BJ (cell line): ENCODE measurements at regions of chr6 and their contacts with region 1.

Region 1: DNA sequence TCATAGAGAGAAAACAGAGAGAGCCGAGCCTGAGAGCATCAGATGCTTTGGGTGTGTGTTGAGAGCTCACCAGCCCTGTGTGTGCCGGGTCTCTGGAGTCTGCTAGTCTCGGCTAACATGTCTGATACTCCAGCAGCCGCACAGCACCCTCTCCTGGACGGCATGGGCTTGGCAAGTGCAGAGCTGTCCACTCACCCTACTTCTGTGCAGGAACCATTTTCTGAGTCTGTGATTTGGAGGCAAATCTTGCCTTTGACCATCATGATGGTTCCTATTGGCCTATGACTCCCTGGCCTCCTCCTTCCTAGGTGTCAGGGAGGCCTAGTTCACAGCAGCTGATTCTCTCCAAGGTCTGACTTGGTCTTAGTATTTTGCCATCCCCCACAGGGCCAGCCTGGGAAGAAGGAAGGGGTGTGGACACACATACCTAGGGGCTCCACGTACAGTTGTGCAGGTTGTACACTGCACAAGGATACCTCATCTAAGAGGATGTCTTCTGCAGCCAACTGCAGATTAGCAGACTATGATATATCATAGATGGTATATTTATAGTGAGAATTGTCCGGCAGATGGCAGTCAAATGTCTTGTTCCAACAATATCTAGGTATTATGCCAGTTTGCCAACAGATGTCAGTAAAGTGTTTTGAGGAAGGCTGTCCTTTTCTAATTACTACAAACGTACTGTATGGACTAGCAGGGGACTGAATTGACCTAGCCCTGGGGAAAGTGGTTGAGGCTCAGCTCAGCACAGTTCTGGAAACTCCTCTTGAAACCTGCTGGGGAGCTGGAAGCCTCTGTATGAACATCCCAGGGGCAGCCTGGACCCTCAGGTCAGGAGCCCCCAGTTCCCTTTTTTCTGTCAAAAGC is 13.0 kb downstream of the FGD2 start:
- DNase-seq: peak; percentile 41
- H3K4me3 ChIP-seq: no peak overlapping the region
- H3K27me3 ChIP-seq: no peaks in the 10 kb centered on the region
- CTCF ChIP-seq: peak; percentile 97

Region 2: DNA sequence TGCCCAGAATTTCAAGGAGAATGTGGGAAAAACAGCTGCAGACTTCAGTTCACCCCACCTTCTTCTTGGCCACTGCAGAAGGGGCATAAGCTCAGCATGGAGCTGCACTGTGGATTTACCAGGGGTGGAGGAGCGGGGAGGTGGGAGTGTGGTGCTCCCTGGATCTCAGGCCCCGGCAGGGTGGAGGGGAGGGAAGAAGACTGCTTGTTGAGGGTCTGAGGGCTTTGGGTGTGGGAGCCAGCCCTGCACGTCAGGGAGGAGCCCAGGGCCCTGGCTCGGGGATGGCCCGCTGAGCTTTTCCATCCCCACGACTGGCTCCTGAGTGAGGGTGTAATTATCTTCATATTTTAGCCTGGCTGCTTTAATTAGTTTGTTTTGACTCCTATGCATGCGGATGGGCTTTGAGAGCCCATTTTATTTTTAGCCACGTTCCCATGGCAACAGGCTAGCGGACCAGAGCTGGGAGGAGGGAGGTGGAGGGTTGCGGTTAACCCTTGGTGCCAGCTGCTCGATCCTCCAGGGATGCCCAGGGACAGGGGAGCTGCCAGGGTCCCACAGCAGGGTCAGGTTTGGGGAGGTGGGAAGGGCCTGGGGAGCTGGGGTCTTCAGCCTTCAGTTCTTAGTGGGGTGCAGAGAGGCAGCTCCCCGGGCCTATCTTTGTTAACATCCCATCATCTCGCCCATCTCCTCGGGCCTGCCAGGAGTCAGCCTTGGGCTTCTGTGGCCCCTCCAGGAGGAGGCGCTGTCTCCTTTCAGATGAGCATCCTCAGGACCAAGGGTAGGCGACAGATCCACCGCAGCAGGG is 252.6 kb before region 1 on chr6:
- CTCF ChIA-PET with region 1: interaction called, 298 read pairs
- POLR2A ChIA-PET with region 1: interaction called, 3 read pairs
- DNase-seq: no peak
- H3K4me3 ChIP-seq: no peak overlapping the region
- H3K27me3 ChIP-seq: no peaks in the 10 kb centered on the region
- CTCF ChIP-seq: peak; percentile 97

Region 3: DNA sequence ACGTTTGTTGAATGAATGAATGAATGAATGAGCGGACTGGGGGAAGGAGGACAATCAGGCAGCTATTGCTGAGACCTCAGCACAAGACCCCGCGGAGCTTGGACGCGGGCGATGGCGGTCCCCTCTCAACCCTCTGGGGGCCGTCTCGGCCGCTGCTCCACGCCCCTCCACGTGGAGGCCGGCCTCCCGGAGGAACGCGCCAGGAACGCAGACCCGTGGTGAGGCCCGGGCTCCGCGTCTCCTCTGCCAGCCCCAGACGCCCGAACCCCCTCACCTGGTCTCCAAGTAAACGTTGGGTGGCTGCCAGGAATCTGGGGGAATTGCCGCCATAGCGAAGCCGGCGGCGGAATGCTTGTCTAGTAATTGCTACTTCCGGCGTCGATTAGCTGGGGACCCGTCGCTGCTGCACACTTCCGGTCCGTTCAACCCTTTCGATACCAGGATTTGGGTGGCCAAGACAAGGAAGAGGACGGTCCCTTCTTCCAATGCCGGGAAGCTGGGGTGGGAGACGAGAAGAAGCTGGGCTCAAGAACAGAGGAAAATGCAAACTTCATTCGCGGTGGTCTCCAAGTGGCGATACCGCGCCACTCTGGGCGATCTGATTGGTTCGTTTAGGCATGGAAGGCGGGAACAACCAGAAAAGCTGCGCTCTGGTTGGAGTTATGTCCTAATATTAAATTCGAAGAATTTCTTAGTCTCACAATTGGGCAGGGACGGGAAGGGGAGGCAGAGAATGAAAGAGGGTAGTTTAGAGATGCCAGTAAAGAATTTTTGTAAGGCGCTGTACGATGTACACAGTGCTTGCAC is 143.8 kb before region 1 on chr6 and contains the start of gene PPIL1:
- CTCF ChIA-PET with region 1: interaction called, 30 read pairs
- POLR2A ChIA-PET with region 1: no interaction called
- DNase-seq: no peak
- H3K4me3 ChIP-seq: peak within 1 kb of the TSS; percentile 55
- H3K27me3 ChIP-seq: no peaks in the 10 kb centered on the region
- CTCF ChIP-seq: no peak
- polyA plus RNA-seq, gene PPIL1: 23.4 and 34.8 TPM in 2 replicates

Region 4: GRCh38 chr6:36917541-36918193 is 100.8 kb before region 1 on chr6:
- CTCF ChIA-PET with region 1: interaction called, 19 read pairs
- POLR2A ChIA-PET with region 1: no interaction called
- DNase-seq: peak; percentile 98
- H3K4me3 ChIP-seq: no peak overlapping the region
- H3K27me3 ChIP-seq: no peaks in the 10 kb centered on the region
- CTCF ChIP-seq: no peak

Region 5: GRCh38 chr6:37005061-37005810 is 13.2 kb before region 1 on chr6 and contains the start of gene FGD2:
- CTCF ChIA-PET with region 1: interaction called, 28 read pairs
- POLR2A ChIA-PET with region 1: no interaction called
- DNase-seq: no peak
- H3K4me3 ChIP-seq: no peak within 1 kb of the TSS
- H3K27me3 ChIP-seq: peaks cover 2% of the 10 kb centered on the region
- CTCF ChIP-seq: no peak
- polyA plus RNA-seq, gene FGD2: not detected in 2 replicates

Region 6: DNA sequence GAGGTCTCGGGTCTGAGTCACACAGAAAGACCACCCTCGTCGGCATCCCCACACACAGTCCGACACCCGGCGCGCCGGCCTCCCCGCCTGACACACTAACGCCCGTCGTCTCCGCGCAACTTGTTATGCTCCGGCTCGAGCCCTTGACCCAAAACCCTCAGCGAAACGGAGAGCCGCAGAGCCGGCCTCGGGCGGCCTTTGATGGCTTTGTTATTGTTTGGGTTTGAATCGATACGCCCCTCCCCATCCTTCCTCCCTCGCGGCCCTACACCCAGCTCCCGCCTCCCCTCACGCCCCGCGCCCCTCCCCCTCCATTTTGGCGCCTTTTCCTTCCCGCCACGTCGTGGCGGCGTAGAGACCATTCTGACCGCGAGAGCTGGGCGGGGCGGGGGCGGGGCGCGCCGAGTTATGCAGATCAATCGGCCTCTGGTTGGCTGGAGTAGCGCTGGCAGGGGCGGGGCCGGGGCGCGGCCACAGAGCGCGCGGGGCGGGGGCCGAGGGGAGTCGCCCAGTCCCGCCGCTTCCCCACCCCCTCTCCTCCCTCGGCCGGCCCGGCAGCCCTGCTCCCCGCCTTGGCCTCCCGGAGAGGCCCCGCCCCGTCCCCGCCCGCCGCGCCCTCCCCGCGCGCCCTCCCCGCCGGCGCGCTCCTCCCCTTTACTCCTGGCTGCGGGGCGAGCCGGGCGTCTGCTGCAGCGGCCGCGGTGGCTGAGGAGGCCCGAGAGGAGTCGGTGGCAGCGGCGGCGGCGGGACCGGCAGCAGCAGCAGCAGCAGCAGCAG is 151.3 kb after region 1 on chr6 and contains the start of gene PIM1:
- CTCF ChIA-PET with region 1: interaction called, 48 read pairs
- POLR2A ChIA-PET with region 1: no interaction called
- DNase-seq: peak; percentile 69
- H3K4me3 ChIP-seq: peak within 1 kb of the TSS; percentile 86
- H3K27me3 ChIP-seq: no peaks in the 10 kb centered on the region
- CTCF ChIP-seq: no peak
- polyA plus RNA-seq, gene PIM1: 13.9 and 20.7 TPM in 2 replicates